Naive thymus-derived CD4-positive, alpha-beta T cell (primary cell): ENCODE measurements at regions of chr3 and their contacts with region 1.

Region 1: DNA sequence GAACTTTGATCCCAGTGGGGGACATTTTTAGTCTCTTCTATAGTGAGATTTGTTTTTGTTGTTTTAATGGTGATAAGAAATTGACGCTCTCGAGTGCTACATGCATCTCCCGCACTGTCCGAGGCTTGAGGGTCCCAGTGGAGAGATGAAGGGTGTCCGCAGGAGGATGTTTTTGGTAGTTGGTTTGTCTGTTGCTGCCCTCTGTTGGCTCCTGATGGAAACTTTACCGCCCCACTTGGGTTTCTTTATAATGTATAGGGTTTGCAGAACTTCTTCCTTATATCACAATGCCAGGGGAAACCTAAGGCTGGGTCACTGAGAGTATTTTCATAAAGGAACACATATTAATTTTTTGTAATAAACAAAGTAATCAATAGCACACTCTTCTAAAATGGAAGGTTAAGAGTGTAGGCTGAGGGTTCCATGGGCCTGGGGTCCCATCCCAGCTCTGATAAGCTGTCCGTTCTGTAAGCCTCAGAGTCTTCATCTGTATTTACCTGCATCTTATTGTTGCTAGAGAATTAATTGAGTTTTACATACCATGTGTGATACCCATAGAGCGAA is 185.3 kb upstream of the FEZF2 start:
- DNase-seq: no peak
- ATAC-seq: no peak
- H3K4me3 ChIP-seq: no peak overlapping the region
- H3K4me3 Mint-ChIP-seq: no peak overlapping the region
- H3K27ac ChIP-seq: no peak overlapping the region
- H3K27ac Mint-ChIP-seq: no peak overlapping the region
- H3K4me1 ChIP-seq: no peaks in the 10 kb centered on the region
- H3K4me1 Mint-ChIP-seq: no peaks in the 10 kb centered on the region
- H3K27me3 ChIP-seq: no peaks in the 10 kb centered on the region
- H3K27me3 Mint-ChIP-seq: peaks cover 0 to 15% (median 2%) of the 10 kb centered on the region in 5 donors

Region 2: DNA sequence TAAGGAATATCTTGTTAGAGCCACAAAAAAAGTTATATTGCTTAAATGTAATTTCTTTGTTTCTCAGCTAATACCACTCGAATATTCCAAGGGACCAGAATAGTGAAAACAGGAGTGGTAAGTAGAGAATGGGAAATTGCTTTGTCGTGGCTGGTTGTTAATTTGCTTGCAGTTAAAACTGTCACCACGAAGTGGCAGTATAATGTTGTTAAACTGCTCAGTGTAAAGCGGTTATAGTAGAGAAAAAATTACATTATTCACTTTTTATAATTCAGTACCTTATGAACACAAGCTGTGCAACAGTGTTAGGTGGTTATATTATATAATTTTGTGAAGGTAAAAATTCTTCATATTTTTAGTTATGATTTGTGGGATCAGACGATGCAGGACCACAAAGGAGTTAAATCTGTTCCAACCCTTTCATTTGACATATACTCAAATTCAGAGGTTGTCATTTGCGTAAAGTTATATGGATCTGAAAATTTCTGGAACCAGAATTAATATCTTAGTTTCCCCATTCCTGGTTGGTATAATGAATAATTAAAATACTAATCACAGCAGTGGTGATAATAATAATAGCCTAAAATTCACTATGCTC is 357.1 kb before region 1 on chr3:
- CTCF ChIA-PET with region 1: interaction called, 4 read pairs
- POLR2A ChIA-PET with region 1: no interaction called
- intact Hi-C with region 1: loop called in 1 of 2 experiments (anchors 2 kb)
- DNase-seq: no peak
- ATAC-seq: no peak
- H3K4me3 ChIP-seq: no peak overlapping the region
- H3K4me3 Mint-ChIP-seq: no peak overlapping the region
- H3K27ac ChIP-seq: no peak overlapping the region
- H3K27ac Mint-ChIP-seq: no peak overlapping the region
- H3K4me1 ChIP-seq: no peaks in the 10 kb centered on the region
- H3K4me1 Mint-ChIP-seq: no peaks in the 10 kb centered on the region
- H3K27me3 ChIP-seq: no peaks in the 10 kb centered on the region
- H3K27me3 Mint-ChIP-seq: peaks cover 0 to 19% (median 3%) of the 10 kb centered on the region in 5 donors

Region 3: DNA sequence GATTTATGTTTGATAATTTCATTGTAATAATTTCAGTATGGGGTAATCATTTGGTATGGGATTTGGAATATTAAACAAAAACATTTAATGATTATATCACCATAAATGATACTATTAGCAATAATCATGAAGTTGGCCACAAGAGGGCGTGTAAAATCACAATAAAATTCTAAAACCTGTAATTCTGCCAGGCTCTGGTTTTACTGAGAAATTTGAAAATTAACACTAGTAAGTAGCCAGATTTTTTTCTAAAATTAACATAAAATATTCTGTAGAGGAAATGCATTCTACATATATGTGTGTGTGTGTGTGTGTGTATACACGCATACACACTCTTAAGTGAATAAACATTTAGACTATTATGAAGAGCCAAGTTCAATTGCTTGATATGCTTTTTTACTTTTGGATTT is 225.8 kb before region 1 on chr3:
- CTCF ChIA-PET with region 1: no interaction called
- POLR2A ChIA-PET with region 1: no interaction called
- intact Hi-C with region 1: loop called (anchors 1 to 2 kb)
- DNase-seq: no peak
- ATAC-seq: no peak
- H3K4me3 ChIP-seq: no peak overlapping the region
- H3K4me3 Mint-ChIP-seq: no peak overlapping the region
- H3K27ac ChIP-seq: no peak overlapping the region
- H3K27ac Mint-ChIP-seq: no peak overlapping the region
- H3K4me1 ChIP-seq: no peaks in the 10 kb centered on the region
- H3K4me1 Mint-ChIP-seq: peaks cover 0 to 1% (median 0%) of the 10 kb centered on the region in 7 donors
- H3K27me3 ChIP-seq: no peaks in the 10 kb centered on the region
- H3K27me3 Mint-ChIP-seq: peaks cover 0 to 5% (median 0%) of the 10 kb centered on the region in 5 donors